K562 (cell line): ENCODE measurements at regions of chr15 and their contacts with region 1.

Region 1: GRCh38 chr15:69413822-69414700 is at the start of gene KIF23:
- DNase-seq: peak; percentile 95 to 99 (median 98)
- ATAC-seq: peak; percentile 98
- H3K4me3 ChIP-seq: peak within 1 kb of the TSS; percentile 78
- H3K27ac ChIP-seq: peak within 1 kb of the TSS; percentile 91
- H3K4me1 ChIP-seq: peaks cover 0 to 9% of the 10 kb centered on the region in 2 experiments; a peak in 2 of 5 replicates
- H3K27me3 ChIP-seq: no peaks in the 10 kb centered on the region
- CTCF ChIP-seq: no peak
- EP300 ChIP-seq: no peak
- POLR2A ChIP-seq: peak; percentile 89
- RAD21 ChIP-seq: no peak
- polyA plus RNA-seq, gene KIF23: 29.4 to 45.7 TPM

Region 2: DNA sequence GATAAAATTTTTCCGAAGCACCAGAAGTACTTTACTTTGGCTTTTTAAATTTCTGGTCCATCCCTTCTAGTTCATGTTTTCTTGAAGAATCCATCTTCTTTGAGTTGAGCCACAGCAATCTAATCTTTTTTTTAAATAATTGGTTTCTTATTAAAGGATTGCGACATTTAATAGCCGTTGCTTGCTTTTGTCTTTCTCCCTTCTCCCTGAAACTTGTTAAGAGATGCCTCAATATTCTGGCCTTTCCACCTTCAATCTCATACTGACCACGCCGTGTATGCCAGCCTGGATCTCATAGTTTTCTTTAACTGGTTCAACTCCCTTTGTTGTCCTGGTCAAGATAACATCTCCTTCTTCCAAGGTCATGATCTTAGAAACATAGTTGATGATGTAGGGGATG is 20.2 kb after region 1 on chr15:
- CTCF ChIA-PET with region 1: no interaction called
- POLR2A ChIA-PET with region 1: interaction called, 17 read pairs
- in situ Hi-C with region 1: no loop called
- intact Hi-C with region 1: no loop called
- DNase-seq: no peak
- ATAC-seq: no peak
- H3K4me3 ChIP-seq: no peak overlapping the region
- H3K27ac ChIP-seq: no peak overlapping the region
- H3K4me1 ChIP-seq: no peaks in the 10 kb centered on the region
- H3K27me3 ChIP-seq: no peaks in the 10 kb centered on the region
- CTCF ChIP-seq: no peak
- EP300 ChIP-seq: no peak
- POLR2A ChIP-seq: no peak
- RAD21 ChIP-seq: no peak

Region 3: GRCh38 chr15:69452692-69453521 is 38.8 kb after region 1 on chr15 and contains the start of gene RPLP1:
- CTCF ChIA-PET with region 1: no interaction called
- POLR2A ChIA-PET with region 1: interaction called, 30 read pairs
- in situ Hi-C with region 1: no loop called
- intact Hi-C with region 1: loop called (anchors 5 kb)
- DNase-seq: peak; percentile 96 to 99 (median 96)
- ATAC-seq: peak; percentile 87
- H3K4me3 ChIP-seq: peak within 1 kb of the TSS; percentile 98
- H3K27ac ChIP-seq: peak within 1 kb of the TSS; percentile 90
- H3K4me1 ChIP-seq: peaks cover 9 to 16% of the 10 kb centered on the region in 2 experiments; a peak in 4 of 5 replicates
- H3K27me3 ChIP-seq: no peaks in the 10 kb centered on the region
- CTCF ChIP-seq: no peak
- EP300 ChIP-seq: no peak
- POLR2A ChIP-seq: peak; percentile 100
- RAD21 ChIP-seq: no peak
- polyA plus RNA-seq, gene RPLP1: 2,333 to 2,378 TPM

Region 4: GRCh38 chr15:69462493-69463181 is 48.6 kb after region 1 on chr15:
- CTCF ChIA-PET with region 1: no interaction called
- POLR2A ChIA-PET with region 1: interaction called, 3 read pairs
- in situ Hi-C with region 1: no loop called
- intact Hi-C with region 1: loop called (anchors 2 kb)
- DNase-seq: peak; percentile 96 to 98 (median 97)
- ATAC-seq: peak; percentile 96
- H3K4me3 ChIP-seq: peak overlapping the region; percentile 45
- H3K27ac ChIP-seq: peak overlapping the region; percentile 92
- H3K4me1 ChIP-seq: peaks cover 12 to 27% of the 10 kb centered on the region in 2 experiments; a peak in 4 of 5 replicates
- H3K27me3 ChIP-seq: no peaks in the 10 kb centered on the region
- CTCF ChIP-seq: peak; percentile 80 to 96 (median 95); a peak in 5 of 6 replicates
- EP300 ChIP-seq: peak; percentile 35; the same call in 1 of the 2 replicates
- POLR2A ChIP-seq: peak; percentile 93
- RAD21 ChIP-seq: no peak